H1 (cell line): ENCODE measurements at regions of chr2 and their contacts with region 1.

Region 1: DNA sequence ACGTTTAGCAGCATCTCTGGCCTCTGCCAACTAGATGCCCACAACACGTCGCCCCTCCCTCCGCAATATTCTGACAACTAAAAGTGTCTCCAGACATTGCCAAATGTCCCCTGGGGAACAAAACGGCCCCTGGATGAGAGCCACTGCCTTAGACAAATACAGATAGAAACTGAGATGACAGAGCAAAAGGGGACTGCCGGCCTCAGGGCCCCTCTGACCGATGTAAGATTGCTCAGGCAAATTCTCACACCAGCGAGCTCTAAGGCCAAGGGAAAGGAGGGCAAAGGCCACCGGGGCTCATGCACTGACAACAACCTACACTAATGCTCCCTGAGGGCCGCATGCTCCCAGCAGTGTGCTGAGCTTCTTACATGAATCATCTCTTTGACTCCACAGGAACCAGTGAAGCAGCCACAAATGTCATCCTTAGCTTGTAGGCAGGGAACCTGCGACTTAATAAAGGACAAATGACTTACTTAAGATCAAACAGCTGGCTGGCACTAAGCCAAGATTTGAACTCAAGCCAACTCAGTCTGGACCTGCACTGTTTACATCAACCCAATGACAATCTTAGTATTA is 228.5 kb downstream of the TTC32 start:
- DNase-seq: no peak
- H3K4me3 ChIP-seq: no peak overlapping the region
- H3K27ac ChIP-seq: no peak overlapping the region
- H3K4me1 ChIP-seq: no peaks in the 10 kb centered on the region
- H3K27me3 ChIP-seq: no peaks in the 10 kb centered on the region
- CTCF ChIP-seq: no peak
- EP300 ChIP-seq: no peak
- POLR2A ChIP-seq: no peak
- RAD21 ChIP-seq: no peak

Region 2: GRCh38 chr2:19614066-19614465 is 59.2 kb before region 1 on chr2:
- CTCF ChIA-PET with region 1: no interaction called
- POLR2A ChIA-PET with region 1: no interaction called
- DNase-seq: no peak
- H3K4me3 ChIP-seq: no peak overlapping the region
- H3K27ac ChIP-seq: no peak overlapping the region
- H3K4me1 ChIP-seq: no peaks in the 10 kb centered on the region
- H3K27me3 ChIP-seq: no peaks in the 10 kb centered on the region
- CTCF ChIP-seq: no peak
- EP300 ChIP-seq: no peak
- POLR2A ChIP-seq: no peak
- RAD21 ChIP-seq: no peak

Region 3: DNA sequence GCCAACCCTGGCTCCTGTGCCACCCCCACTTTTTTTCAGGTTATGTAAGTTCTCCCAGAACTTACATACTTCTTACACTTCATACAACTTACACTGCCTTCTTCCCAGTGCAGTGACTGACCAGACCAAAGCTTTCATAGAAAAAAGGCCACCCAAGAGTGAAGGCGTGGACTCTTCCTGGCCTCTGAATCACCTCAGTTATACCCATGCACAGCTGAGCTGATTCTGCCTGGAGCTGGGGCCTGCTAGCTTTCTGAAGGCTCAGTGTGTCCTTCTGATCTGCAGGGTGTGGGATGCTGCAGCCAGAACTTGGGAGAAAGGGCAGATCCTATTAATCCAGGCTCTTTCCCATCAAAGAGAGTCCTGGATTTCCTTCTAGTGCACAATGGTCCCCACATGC is 12.4 kb after region 1 on chr2:
- CTCF ChIA-PET with region 1: interaction called, 23 read pairs
- POLR2A ChIA-PET with region 1: interaction called, 3 read pairs
- DNase-seq: no peak
- H3K4me3 ChIP-seq: no peak overlapping the region
- H3K27ac ChIP-seq: no peak overlapping the region
- H3K4me1 ChIP-seq: no peaks in the 10 kb centered on the region
- H3K27me3 ChIP-seq: no peaks in the 10 kb centered on the region
- CTCF ChIP-seq: no peak
- EP300 ChIP-seq: no peak
- POLR2A ChIP-seq: no peak
- RAD21 ChIP-seq: no peak